Endothelial cell of umbilical vein (primary cell): ENCODE measurements at regions of chr7 and their contacts with region 1.

Region 1: DNA sequence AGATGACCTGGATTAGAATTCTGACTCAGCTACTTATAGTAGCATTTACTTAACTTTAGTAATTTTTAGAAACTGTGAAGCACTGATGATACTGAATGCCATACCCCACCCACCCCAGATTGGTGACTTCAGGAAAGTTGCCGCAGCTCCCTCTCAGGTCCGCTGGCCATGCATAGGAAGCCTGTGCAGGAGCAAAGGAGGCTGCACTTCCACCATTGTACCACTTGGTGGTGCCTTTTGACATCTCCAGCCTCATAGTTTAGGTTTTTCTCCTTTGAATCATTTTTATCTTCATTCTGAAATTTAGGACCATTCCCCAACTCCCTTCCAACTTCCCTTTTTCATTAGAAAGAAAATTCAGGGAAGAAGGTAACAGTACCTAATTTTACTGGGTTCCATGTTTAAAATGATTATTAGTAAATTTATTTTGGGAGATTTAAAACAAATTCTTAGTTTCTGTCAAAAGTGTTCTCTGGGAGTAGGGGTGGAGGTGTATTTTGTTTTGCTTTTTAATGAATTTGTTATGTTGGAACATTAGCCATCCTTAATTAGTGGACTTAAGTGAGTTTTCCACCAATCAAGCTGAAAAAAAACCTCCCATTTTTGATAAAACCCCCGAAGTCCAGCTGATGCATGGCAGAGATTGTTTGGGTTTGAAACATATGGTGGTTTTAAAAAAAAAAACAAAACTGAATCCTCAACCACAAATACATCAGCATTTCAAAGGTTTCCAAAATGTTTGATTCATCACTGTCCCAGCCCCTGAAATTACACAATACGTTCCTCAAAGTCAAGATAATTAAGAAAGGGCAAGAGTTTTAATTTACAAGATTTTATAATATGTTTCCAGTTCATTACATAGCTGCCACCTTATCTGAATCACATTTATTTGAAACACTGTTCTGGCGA is 109.6 kb downstream of the WNT2 start:
- DNase-seq: peak; percentile 68
- H3K4me3 ChIP-seq: no peak overlapping the region
- H3K27ac ChIP-seq: no peak overlapping the region
- H3K4me1 ChIP-seq: peaks cover 4% of the 10 kb centered on the region
- H3K27me3 ChIP-seq: no peaks in the 10 kb centered on the region
- CTCF ChIP-seq: peak; percentile 84 to 85
- POLR2A ChIP-seq: no peak

Region 2: DNA sequence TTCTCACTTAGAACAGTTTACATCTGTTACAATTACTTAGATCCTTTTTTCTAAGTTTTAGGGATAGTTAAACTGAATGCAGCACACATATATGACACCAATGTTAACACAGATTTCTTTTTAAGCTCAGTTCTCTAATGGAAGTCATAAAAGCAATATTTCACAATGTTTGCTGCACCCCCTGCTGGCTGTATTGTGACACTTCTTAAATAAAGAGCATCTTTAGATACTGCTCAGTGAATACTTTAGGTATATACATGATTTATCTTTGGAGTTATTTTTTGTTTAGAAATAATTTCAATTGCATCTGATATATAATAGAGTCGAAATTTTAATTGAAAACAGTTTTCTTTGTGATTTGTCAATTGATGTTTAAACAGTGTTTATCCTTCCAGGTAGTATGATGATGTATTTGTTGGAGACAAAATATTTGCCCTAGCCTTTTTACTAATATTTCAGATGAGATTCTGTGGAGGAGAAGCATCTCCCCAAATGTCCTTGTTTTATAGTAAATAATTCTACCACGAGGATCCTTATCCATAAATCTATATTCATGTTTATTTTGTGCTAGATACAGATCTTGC is 85.5 kb before region 1 on chr7:
- CTCF ChIA-PET with region 1: interaction called, 20 read pairs
- POLR2A ChIA-PET with region 1: no interaction called
- dilution Hi-C with region 1: no loop called
- intact Hi-C with region 1: no loop called
- DNase-seq: peak; percentile 74
- H3K4me3 ChIP-seq: no peak overlapping the region
- H3K27ac ChIP-seq: no peak overlapping the region
- H3K4me1 ChIP-seq: peaks cover 29% of the 10 kb centered on the region
- H3K27me3 ChIP-seq: no peaks in the 10 kb centered on the region
- CTCF ChIP-seq: peak; percentile 41 to 45
- POLR2A ChIP-seq: no peak

Region 3: DNA sequence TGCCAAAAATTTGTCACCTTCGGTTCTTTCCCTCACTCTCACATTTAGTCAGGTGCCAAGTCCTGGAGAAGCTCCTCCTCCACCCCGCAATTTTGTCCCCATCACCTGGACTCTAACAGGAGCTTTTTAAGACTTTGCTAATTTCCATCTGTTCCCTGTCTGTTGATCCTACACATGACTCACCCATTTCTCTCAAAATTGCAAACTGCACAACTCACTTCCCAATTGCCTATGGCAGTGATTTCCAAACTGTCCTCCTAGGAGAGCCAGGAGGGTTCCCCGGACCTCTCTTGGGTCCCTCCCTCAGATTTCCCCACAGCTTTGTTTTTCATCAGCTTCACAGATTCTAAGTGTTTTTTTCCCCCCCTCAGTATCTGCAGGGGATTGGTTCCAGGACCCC is 10.7 kb before region 1 on chr7:
- CTCF ChIA-PET with region 1: interaction called, 25 read pairs
- POLR2A ChIA-PET with region 1: no interaction called
- dilution Hi-C with region 1: no loop called
- intact Hi-C with region 1: no loop called
- DNase-seq: no peak
- H3K4me3 ChIP-seq: no peak overlapping the region
- H3K27ac ChIP-seq: no peak overlapping the region
- H3K4me1 ChIP-seq: peaks cover 3% of the 10 kb centered on the region
- H3K27me3 ChIP-seq: no peaks in the 10 kb centered on the region
- CTCF ChIP-seq: no peak
- POLR2A ChIP-seq: no peak

Region 4: GRCh38 chr7:117312598-117313580 is 99.7 kb after region 1 on chr7:
- CTCF ChIA-PET with region 1: interaction called, 8 read pairs
- POLR2A ChIA-PET with region 1: no interaction called
- dilution Hi-C with region 1: no loop called
- intact Hi-C with region 1: loop called (anchors 2 kb)
- DNase-seq: no peak
- H3K4me3 ChIP-seq: no peak overlapping the region
- H3K27ac ChIP-seq: no peak overlapping the region
- H3K4me1 ChIP-seq: no peaks in the 10 kb centered on the region
- H3K27me3 ChIP-seq: peaks cover 7 to 8% of the 10 kb centered on the region in 2 experiments
- CTCF ChIP-seq: no peak
- POLR2A ChIP-seq: no peak

Region 5: DNA sequence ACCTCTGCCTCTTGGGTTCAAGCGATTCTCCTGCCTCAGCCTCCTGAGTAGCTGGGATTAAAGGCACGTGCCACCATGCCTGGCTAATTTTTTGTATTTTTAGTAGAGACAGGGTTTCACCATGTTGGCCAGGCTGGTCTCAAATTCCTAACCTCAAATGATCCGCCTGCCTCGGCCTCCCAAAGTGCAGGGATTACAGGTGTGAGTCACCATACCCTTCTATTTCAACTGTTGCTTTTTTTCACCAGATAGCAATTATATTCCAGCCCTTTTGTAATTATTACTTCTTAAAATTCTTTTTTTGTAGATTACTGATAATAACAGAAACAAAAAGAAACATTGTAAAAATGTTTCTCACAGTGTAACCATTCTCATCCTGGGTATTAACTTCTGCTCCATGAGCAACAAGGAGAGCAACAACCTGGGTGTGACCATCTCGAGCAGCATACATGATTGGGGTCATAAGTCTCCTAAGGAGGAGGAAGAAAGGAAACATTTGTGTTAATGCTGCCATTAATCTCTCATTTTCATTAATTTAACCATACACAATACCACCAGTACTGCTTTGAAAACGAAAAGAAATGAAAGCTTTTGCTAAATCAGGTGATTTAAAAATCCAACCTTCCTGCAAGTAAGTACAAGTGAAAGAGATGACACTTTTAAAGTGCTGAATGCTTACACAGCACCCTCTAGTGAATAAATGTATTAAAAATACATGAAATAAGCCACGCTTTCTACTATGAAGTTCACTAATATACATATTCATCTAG is 172.3 kb after region 1 on chr7:
- CTCF ChIA-PET with region 1: interaction called, 51 read pairs
- POLR2A ChIA-PET with region 1: no interaction called
- dilution Hi-C with region 1: no loop called
- intact Hi-C with region 1: loop called (anchors 1 kb)
- DNase-seq: peak; percentile 47
- H3K4me3 ChIP-seq: no peak overlapping the region
- H3K27ac ChIP-seq: no peak overlapping the region
- H3K4me1 ChIP-seq: no peaks in the 10 kb centered on the region
- H3K27me3 ChIP-seq: no peaks in the 10 kb centered on the region
- CTCF ChIP-seq: peak in 1 of 2 donors; percentile 10
- POLR2A ChIP-seq: no peak

Region 6: DNA sequence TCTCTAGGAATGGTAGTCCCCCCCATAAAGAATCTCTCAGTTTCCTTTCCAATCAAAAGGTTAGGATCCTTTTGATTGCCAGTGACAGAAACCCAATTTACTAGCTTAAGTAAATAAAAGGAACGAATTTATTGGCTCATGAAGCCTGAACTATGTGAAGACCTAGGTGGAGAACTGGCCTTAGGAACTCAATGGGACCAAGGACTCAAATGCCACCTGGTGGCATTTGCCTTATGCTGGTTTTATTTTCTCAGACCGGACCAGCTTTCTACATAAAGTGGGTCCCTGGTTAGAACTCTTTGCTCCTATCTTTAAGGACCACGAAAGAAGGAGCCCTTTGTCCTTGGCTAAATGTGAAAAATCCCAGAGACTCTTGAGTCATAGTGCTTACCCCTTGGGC is 292.0 kb after region 1 on chr7:
- CTCF ChIA-PET with region 1: no interaction called
- POLR2A ChIA-PET with region 1: no interaction called
- dilution Hi-C with region 1: no loop called
- intact Hi-C with region 1: no loop called
- DNase-seq: no peak
- H3K4me3 ChIP-seq: no peak overlapping the region
- H3K27ac ChIP-seq: no peak overlapping the region
- H3K4me1 ChIP-seq: no peaks in the 10 kb centered on the region
- H3K27me3 ChIP-seq: no peaks in the 10 kb centered on the region
- CTCF ChIP-seq: no peak
- POLR2A ChIP-seq: no peak

Region 7: GRCh38 chr7:117715784-117716445 is 502.7 kb after region 1 on chr7:
- CTCF ChIA-PET with region 1: interaction called, 11 read pairs
- POLR2A ChIA-PET with region 1: no interaction called
- dilution Hi-C with region 1: no loop called
- intact Hi-C with region 1: loop called (anchors 5 kb)
- DNase-seq: peak; percentile 64
- H3K4me3 ChIP-seq: no peak overlapping the region
- H3K27ac ChIP-seq: no peak overlapping the region
- H3K4me1 ChIP-seq: no peaks in the 10 kb centered on the region
- H3K27me3 ChIP-seq: peaks cover 0 to 2% of the 10 kb centered on the region in 2 experiments
- CTCF ChIP-seq: peak; percentile 41 to 62
- POLR2A ChIP-seq: no peak